Activated naive CD4-positive, alpha-beta T cell treated with anti-CD3 and anti-CD28 coated beads, Interleukin-2, amount 10 ng/mL, durations not matched to agents 7 days and 5 days (primary cell): ENCODE measurements at regions of chr12 and their contacts with region 1.

Region 1: GRCh38 chr12:57111031-57111734 is at the start of gene STAT6:
- DNase-seq: peak; percentile 94
- H3K4me3 Mint-ChIP-seq: peak within 1 kb of the TSS; percentile 82
- H3K27ac Mint-ChIP-seq: peak within 1 kb of the TSS; percentile 94
- H3K4me1 Mint-ChIP-seq: peaks cover 50% of the 10 kb centered on the region
- H3K27me3 Mint-ChIP-seq: peaks cover 5% of the 10 kb centered on the region

Region 2: DNA sequence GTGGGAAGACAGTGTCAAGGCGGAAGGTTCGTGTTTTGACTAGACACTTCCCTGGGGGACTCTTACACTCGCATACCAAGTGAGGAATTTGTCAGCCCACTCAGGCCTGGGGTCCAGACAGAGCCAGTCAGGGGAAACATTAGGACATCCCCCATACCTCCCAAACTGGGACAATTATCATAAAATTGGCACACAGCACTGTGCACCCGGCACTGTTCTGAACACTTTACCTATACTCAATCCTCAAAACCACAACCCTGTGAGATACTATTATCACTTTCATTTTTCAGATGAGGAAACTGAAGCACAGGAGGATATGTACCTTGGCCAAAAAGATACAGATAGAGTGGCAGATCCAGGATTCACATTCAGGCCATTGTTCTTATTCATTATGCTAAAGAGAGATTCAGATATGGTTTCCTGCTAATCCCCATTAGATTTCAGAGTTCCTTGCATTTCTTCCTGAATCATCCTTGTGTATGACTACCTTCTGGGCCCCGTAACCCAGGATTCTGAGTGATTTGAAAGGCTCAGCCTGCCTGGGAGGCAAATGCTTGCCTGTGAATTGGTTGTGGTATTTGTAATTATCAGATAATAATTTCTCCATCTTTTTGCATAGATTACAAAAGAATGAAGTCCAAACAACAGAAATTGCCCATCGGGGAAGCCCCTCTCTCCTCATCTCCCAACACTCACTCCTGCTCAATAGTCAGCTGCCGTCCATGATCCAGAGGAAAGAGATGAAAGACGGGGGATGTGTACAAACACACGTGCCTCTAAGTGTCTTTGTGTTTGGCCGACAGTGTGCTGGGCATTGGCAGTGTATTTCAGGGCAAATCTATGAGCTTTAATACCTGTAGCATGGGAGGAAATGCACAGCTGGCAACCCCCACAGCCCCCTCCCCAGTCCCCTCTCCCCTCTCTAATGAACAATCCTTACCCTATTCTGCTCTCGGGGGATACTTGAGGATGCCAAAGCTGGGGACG is 99.5 kb before region 1 on chr12:
- CTCF ChIA-PET with region 1: interaction called, 61 read pairs
- DNase-seq: peak; percentile 59
- H3K4me3 Mint-ChIP-seq: peak overlapping the region; percentile 8
- H3K27ac Mint-ChIP-seq: peak overlapping the region; percentile 79
- H3K4me1 Mint-ChIP-seq: peaks cover 53% of the 10 kb centered on the region
- H3K27me3 Mint-ChIP-seq: peaks cover 36% of the 10 kb centered on the region

Region 3: GRCh38 chr12:57069523-57069922 is 41.7 kb before region 1 on chr12:
- CTCF ChIA-PET with region 1: interaction called, 116 read pairs
- DNase-seq: peak; percentile 74
- H3K4me3 Mint-ChIP-seq: no peak overlapping the region
- H3K27ac Mint-ChIP-seq: peak overlapping the region; percentile 88
- H3K4me1 Mint-ChIP-seq: peaks cover 49% of the 10 kb centered on the region
- H3K27me3 Mint-ChIP-seq: no peaks in the 10 kb centered on the region

Region 4: GRCh38 chr12:57088459-57089248 is 22.5 kb before region 1 on chr12 and contains the start of gene NAB2:
- CTCF ChIA-PET with region 1: interaction called, 100 read pairs
- DNase-seq: peak; percentile 97
- H3K4me3 Mint-ChIP-seq: peak within 1 kb of the TSS; percentile 88
- H3K27ac Mint-ChIP-seq: peak within 1 kb of the TSS; percentile 94
- H3K4me1 Mint-ChIP-seq: peaks cover 67% of the 10 kb centered on the region
- H3K27me3 Mint-ChIP-seq: no peaks in the 10 kb centered on the region

Region 5: GRCh38 chr12:57182921-57183790 is 72.0 kb after region 1 on chr12:
- CTCF ChIA-PET with region 1: interaction called, 12 read pairs
- DNase-seq: peak; percentile 88
- H3K4me3 Mint-ChIP-seq: no peak overlapping the region
- H3K27ac Mint-ChIP-seq: no peak overlapping the region
- H3K4me1 Mint-ChIP-seq: peaks cover 4% of the 10 kb centered on the region
- H3K27me3 Mint-ChIP-seq: peaks cover 21% of the 10 kb centered on the region